ENCODE measurements at regions of chr5 and their contacts with region 1.

Region 1: GRCh38 chr5:134904630-134905245 is at the start of gene PCBD2:
- DNase-seq: peak; percentile 88 to 94 (median 90)
- H3K4me3 ChIP-seq: peak within 1 kb of the TSS; percentile 92
- H3K27ac ChIP-seq: peak within 1 kb of the TSS; percentile 91 to 100
- H3K4me1 ChIP-seq: peaks cover 2% of the 10 kb centered on the region
- H3K27me3 ChIP-seq: no peaks in the 10 kb centered on the region
- CTCF ChIP-seq: peak; percentile 59 to 96 (median 93)
- EP300 ChIP-seq: no peak
- POLR2A ChIP-seq: no peak
- total RNA-seq, gene PCBD2: 5.7 to 13.1 (median 9.5) TPM

Region 2: DNA sequence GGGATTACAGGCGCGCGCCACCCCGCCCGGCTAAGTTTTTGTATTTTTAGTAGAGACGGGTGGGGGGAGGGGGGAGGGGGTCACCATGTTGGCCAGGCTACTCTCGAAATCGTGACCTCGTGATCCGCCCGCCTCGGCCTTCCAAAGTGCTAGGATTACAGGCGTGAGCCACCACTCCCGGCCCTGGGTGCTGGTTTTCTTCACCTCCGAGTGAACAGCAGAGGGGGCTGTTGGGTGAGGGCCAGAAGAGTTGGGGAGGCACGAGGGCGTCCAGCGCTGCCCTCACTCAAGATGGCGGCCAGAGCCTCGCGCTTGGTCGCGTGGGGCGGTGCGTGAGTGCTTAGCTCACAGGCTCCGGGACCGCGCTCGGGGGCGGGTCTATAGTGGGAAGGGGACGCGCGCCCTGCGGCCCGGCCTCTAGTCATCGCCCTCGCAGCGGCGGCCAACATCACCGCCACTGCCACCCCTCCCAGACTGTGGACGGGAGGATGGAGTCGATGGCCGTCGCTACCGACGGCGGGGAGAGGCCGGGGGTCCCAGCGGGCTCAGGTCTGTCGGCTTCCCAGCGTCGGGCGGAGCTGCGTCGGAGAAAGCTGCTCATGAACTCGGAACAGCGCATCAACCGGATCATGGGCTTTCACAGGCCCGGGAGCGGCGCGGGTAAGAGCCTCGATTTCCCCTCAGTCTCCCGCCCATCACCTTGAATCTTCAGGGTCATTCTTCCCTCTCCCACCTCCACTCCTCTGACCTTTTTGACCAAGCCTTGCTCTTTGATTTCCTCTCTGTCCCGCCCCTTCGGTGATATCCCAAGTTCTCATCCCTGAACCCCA is 166.4 kb before region 1 on chr5 and contains the start of gene CAMLG:
- intact Hi-C with region 1: loop called in 2 of 4 experiments (anchors 5 to 10 kb)
- DNase-seq: peak; percentile 98 to 99 (median 98)
- H3K4me3 ChIP-seq: peak within 1 kb of the TSS; percentile 61
- H3K27ac ChIP-seq: peak within 1 kb of the TSS; percentile 67 to 94
- H3K4me1 ChIP-seq: peaks cover 2% of the 10 kb centered on the region
- H3K27me3 ChIP-seq: no peaks in the 10 kb centered on the region
- CTCF ChIP-seq: peak in 2 of 3 donors; percentile 53 to 62
- EP300 ChIP-seq: no peak
- POLR2A ChIP-seq: peak; percentile 94
- total RNA-seq, gene CAMLG: 40.6 to 78.5 (median 65.3) TPM

Region 3: GRCh38 chr5:134749415-134749814 is 155.3 kb before region 1 on chr5:
- intact Hi-C with region 1: loop called in 2 of 4 experiments (anchors 5 to 10 kb)
- DNase-seq: no peak
- H3K4me3 ChIP-seq: no peak overlapping the region
- H3K27ac ChIP-seq: no peak overlapping the region
- H3K4me1 ChIP-seq: no peaks in the 10 kb centered on the region
- H3K27me3 ChIP-seq: no peaks in the 10 kb centered on the region
- CTCF ChIP-seq: no peak
- EP300 ChIP-seq: no peak
- POLR2A ChIP-seq: no peak

Region 4: DNA sequence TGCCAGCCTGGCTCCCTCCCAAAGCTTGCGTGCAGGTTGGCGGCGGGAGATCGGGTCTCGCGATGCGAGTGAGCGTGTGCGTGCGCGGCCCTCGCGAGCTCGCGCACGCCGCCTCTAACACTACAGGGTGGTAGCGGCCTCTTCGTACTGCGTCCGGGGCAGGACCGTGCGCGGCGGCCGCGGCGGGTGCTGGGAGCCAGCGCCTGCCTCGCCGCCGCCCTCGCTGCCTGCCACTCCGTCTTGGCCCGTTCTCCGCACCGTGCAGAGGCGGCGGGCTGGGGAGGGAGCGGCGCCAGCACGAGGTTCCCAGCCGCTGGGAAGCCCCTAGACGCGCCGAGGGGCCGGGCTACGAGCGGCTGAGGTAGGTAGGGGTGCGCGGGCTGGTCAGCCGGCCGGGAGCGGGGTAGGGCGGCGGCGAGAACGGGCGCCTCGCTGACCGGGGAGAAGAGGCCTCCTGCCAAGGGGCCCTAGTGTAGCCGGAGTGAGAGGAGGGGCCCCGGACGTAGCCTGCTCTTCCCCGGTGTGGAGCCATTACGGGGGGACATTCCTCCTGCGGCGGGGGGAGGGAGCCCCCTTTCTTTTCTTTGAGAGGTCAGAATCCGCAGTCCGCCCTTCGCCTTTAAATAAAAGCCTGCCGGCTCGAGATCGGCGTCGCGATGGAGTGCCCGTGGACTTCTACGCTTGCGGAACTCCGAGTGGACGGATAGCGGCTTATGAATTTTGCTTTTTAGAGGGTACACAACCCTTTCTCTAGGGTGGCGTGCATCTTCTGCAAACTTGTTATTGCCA is 58.7 kb before region 1 on chr5 and contains the start of gene C5orf24:
- intact Hi-C with region 1: loop called in 2 of 4 experiments (anchors 2 to 5 kb)
- DNase-seq: peak; percentile 95 to 97 (median 97)
- H3K4me3 ChIP-seq: peak within 1 kb of the TSS; percentile 91
- H3K27ac ChIP-seq: peak within 1 kb of the TSS; percentile 84
- H3K4me1 ChIP-seq: peaks cover 1% of the 10 kb centered on the region
- H3K27me3 ChIP-seq: no peaks in the 10 kb centered on the region
- CTCF ChIP-seq: no peak
- EP300 ChIP-seq: no peak
- POLR2A ChIP-seq: peak; percentile 88
- total RNA-seq, gene C5orf24: 34.5 to 46.8 (median 36.8) TPM